ENCODE measurements at regions of chr2 and their contacts with region 1.

Region 1: GRCh38 chr2:172350839-172351479 is 76.4 kb upstream of the ITGA6 start:
- DNase-seq: peak; percentile 22 to 88 (median 50)

Region 2: GRCh38 chr2:172234716-172235691 is 116.0 kb before region 1 on chr2:
- intact Hi-C with region 1: loop called (anchors 10 kb)
- DNase-seq: peak in 1 of 10 donors; percentile 84

Region 3: GRCh38 chr2:172256886-172257285 is 94.1 kb before region 1 on chr2:
- intact Hi-C with region 1: no loop called
- DNase-seq: peak in 2 of 10 donors; percentile 70

Region 4: GRCh38 chr2:172329774-172330671 is 20.9 kb before region 1 on chr2:
- intact Hi-C with region 1: no loop called
- DNase-seq: no peak